ENCODE measurements at regions of chr7 and their contacts with region 1.

Region 1: GRCh38 chr7:2451171-2452073 is 24.8 kb downstream of the GRIFIN start:
- DNase-seq: no peak
- H3K4me3 ChIP-seq: peak overlapping the region; percentile 38
- CTCF ChIP-seq: peak; percentile 99

Region 2: DNA sequence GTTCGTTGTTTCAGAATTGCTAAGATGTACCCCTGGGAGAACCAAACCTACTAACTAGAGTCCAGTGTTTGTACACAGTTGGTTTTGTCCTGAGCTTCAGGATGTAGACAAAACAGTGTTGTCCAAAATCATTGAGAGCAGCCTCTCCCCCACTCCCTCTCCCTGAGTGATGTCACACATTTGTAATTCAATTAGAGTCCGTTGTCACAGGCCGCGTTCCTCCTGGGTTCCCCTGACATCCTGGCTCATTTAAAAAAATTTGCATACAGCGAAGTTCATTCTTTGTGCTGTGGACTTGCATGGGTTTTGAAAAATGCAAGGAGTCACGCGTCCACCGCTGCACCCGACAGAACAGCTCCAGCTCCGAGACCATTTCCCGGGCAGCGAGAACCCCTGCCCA is 14.5 kb after region 1 on chr7:
- CTCF ChIA-PET with region 1: interaction called, 117 read pairs
- POLR2A ChIA-PET with region 1: no interaction called
- DNase-seq: no peak
- H3K4me3 ChIP-seq: no peak overlapping the region
- CTCF ChIP-seq: no peak

Region 3: DNA sequence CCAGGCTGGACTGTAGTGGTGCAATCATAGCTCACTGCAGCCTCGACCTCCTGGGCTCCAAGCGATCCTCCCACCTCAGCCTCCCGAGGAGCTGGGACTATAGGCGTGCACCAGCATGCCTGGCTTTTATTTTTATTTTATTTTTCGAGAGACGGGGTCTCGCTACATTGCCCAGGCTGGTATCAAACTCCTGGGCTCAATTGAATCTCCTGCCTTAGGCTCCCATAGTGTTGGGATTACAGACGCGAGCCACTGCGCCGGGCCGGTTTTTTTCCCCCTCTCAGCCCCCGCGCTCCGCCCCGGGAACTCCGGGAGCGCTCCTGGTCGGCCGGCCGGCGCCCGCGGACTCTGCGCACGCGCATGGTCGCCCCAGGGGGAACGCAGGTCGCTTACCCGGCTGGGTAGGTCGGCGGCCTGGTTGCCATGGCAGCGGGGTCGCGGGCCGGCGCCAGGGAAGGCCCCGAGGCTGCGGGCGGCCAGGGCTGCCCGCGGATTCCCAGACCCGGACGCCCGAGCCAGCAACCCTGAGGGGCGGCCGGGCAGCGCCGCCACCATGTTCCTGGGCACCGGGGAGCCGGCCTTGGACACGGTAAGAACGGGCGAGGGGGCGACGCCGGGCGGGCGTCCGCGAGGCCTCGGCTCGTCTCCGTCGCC is 107.3 kb after region 1 on chr7 and contains the start of gene IQCE:
- CTCF ChIA-PET with region 1: interaction called, 15 read pairs
- POLR2A ChIA-PET with region 1: no interaction called
- DNase-seq: no peak
- H3K4me3 ChIP-seq: peak within 1 kb of the TSS; percentile 79
- CTCF ChIP-seq: no peak

Region 4: DNA sequence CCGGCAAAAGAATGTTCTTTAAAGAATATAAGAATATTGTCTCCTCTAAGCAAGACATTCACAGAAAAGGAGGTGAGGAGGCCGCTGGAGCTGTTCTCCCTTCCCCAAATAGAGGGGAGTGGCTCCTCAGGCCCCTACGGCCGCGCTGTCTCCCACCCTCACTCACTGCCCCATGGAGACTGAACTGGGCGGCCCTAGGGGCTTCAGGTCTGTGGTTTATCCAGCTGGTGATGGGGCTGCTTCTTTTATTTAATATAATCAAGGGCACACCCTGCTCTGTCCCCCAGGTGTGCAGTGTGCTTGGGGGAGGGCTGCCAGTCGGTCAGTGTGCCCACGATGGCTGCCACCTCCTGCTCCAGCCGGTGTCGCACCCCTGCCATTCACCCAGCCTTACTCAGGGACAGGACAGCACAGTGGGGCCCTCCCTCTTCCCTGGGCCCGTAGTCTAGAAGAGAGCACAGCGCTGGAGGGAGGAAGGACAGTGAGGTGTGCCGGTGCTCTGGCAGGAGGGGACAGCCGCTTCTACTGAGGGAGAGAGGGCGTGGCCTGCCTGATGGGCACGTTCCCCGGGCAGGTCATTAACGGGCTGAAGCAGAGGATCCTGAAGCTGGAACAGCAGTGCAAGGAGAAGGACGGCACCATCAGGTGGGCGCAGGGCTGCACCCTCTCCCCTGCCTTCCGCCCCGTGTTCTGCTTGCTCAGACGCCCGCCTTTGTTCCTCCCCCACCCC is 130.7 kb after region 1 on chr7:
- CTCF ChIA-PET with region 1: no interaction called
- POLR2A ChIA-PET with region 1: no interaction called
- DNase-seq: no peak
- H3K4me3 ChIP-seq: no peak overlapping the region
- CTCF ChIP-seq: no peak

Region 5: DNA sequence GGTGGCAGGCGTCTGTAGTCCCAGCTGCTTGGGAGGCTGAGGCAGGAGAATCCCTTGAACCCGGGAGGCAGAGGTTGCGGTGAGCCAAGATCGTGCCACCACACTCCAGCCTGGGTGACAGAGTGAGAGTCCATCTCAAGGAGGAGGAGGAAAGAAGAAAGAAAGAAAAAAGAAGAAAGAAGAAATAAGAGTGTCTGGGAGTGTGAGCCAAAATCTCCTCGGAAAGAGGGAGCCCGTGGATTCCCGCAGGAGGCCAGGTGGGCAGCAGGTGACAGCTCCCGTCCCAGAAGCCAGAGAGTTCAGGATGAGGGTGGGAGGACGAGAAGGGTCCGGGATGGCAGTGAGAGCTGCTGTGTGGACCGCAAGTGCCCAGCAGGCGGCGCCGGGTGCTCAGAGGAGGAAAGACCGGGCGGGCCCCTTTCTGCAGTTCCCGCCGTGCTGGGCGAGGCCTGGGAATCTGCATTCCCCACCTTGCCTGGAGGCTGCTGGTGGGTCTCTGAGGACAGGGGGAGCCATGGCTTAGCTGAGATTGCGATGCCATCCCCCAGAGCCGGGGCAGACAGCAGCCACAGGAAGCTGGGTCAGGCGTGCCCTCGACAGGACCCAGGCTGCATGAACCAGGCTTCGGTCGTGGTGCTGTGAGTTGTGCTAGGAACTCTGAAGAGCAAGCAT is 219.4 kb after region 1 on chr7:
- CTCF ChIA-PET with region 1: interaction called, 12 read pairs
- POLR2A ChIA-PET with region 1: no interaction called
- DNase-seq: no peak
- H3K4me3 ChIP-seq: no peak overlapping the region
- CTCF ChIP-seq: peak; percentile 96

Region 6: DNA sequence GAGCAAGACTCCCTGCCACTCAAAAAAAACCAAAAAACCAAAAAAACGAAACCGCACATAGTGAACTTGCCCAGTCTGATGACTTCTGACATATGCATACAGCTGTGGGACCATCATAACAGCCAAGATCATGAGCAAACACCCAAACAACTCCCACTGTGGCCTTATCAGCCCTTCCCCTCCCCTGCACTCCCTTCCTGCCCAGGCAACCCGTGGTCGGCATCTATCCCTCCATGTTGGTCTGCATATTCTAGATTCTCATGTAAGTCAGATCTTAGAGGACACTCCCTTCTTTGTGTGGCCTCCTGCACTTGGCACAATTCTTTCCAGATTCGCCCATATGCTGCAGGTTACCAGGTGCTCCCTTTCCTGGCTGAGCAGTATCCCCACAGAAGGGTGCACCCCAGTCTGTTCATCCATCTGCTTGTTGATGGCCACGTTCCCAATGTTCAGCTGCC is 319.9 kb after region 1 on chr7:
- CTCF ChIA-PET with region 1: no interaction called
- POLR2A ChIA-PET with region 1: no interaction called
- DNase-seq: no peak
- H3K4me3 ChIP-seq: no peak overlapping the region
- CTCF ChIP-seq: no peak